ENCODE measurements at regions of chr10 and their contacts with region 1.

Region 1: DNA sequence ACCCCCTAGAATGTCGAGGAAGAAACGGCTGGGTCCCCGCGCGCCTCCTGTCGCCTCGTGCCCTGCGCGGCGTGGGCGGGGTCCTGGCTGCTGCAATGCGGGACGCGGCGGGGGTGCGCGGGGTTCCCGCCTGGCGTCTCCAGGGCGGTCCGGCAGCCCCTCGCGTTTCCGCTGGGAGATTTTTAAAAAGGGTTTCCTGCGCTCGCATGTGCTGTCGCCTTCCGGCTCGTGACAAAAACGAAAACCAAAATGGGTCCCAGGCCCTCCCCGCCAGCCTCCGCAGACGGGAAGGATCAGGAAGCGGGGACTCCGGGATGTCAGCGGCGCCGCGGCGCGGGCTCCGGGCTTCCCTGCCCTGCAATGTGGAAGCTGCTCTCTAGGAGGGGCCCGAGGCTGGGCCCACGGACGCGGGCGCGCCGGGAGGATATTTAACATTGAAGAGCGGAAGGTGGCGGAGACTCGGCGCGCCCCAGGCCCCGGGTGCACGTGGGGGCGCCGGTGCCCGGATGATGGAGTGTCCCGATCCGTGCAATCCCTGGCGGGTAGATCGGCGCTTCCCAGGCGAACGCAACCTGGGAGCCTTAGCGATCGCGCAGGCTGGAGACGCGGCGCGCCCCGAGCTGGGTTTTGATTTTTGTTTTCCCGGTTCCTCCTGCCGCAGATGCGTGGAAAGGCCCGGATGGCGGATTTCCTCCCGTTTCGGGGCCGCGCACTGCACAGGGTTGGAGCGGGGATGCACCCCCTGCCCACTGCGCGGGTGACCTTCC is 1.0 kb downstream of the PFKP start:
- DNase-seq: peak; percentile 63
- H3K4me3 Mint-ChIP-seq: peak overlapping the region; percentile 90
- H3K27ac Mint-ChIP-seq: peak overlapping the region; percentile 84
- H3K4me1 Mint-ChIP-seq: peaks cover 33% of the 10 kb centered on the region
- H3K27me3 Mint-ChIP-seq: peaks cover 12% of the 10 kb centered on the region

Region 2: DNA sequence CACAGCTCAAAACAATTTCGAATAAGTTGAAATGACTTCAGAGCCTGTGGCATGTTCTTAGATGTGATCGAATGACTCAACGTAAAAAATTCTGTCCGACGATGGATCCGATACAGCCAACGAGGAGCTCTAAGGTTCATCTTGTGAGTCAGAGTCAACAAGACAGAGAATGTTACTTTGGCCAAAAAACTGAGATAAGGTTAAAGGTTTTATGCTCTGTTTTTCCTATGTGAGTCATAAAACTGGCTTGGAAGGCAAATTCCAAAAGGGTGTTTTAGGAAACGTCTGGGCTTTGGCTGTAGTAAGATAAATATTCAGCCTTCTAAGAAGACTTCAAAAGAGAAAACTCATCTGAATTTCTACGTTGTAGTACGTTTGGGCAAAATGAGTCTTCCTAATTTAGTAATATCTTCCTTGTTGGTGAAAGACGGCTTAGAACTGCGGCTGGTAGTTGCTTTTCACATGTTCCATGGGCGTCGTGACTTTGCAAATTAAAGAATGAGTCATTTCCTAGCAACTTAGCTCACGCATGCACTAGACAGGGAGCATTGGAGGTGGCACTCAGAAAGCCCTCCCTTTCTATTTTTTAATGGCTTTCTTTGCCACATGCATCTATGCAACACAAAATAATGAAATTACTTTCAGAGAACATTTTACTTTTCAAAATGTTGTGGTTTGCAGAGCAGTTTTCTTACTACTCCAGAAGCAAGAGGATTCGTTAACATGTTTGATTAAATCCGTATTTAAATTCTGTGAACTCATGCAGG is 27.2 kb after region 1 on chr10:
- intact Hi-C with region 1: loop called (anchors 1 kb)
- DNase-seq: peak; percentile 52
- H3K4me3 Mint-ChIP-seq: peak overlapping the region; percentile 31
- H3K27ac Mint-ChIP-seq: peak overlapping the region; percentile 94
- H3K4me1 Mint-ChIP-seq: peaks cover 59% of the 10 kb centered on the region
- H3K27me3 Mint-ChIP-seq: no peaks in the 10 kb centered on the region

Region 3: DNA sequence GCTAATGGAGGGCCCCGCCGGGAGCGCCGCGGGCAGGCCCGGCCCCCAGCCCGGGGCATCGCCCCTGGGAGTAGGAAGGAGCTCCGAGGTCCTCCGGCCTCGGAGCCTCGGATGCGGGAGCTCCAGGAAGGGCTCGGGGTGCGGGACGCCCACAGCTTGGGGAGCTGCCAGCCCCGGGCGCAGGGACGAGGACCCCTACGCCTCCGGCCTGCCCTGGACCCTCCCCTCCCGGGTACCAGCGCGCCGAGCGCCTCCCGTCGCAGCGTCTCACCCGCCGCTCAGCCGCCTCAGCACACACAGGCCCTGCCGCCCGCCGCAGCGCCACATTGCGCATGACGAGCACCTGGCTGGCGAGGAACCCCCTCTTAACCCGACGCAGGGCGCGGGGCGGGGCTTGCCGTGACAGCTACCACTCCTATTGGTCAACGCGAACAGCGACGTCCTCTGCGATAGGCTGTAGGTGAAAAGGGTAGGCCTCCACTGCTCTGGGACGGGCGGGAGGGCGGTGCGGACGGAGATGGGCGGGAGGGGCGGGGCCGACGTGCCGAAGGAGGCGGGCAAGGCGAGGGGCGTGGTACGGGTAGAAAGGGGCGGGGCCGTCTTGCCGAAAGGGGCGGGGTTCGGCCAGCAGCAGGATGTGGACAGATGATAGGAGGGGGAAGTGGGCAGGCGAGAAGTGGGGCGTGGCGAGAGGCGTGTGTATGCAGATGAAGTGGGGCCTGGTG is 104.2 kb after region 1 on chr10 and contains the start of gene PITRM1:
- intact Hi-C with region 1: loop called (anchors 2 kb)
- DNase-seq: peak; percentile 99
- H3K4me3 Mint-ChIP-seq: peak within 1 kb of the TSS; percentile 90
- H3K27ac Mint-ChIP-seq: peak within 1 kb of the TSS; percentile 86
- H3K4me1 Mint-ChIP-seq: peaks cover 7% of the 10 kb centered on the region
- H3K27me3 Mint-ChIP-seq: peaks cover 28% of the 10 kb centered on the region
- total RNA-seq, gene PITRM1: 76.4 and 84.5 TPM in 2 replicates

Measured in activated T-helper 2 cell treated with anti-CD3 and anti-CD28 coated beads, Interferon-gamma antibody, Interleukin-2, Interleukin-4, amounts not matched to agents 10 μg/mL and 5 μg/mL and 100 μg/mL, durations not matched to agents 14 hours and 24 hours and 36 hours (primary cell).